ENCODE measurements at regions of chr11 and their contacts with region 1.

Region 1: DNA sequence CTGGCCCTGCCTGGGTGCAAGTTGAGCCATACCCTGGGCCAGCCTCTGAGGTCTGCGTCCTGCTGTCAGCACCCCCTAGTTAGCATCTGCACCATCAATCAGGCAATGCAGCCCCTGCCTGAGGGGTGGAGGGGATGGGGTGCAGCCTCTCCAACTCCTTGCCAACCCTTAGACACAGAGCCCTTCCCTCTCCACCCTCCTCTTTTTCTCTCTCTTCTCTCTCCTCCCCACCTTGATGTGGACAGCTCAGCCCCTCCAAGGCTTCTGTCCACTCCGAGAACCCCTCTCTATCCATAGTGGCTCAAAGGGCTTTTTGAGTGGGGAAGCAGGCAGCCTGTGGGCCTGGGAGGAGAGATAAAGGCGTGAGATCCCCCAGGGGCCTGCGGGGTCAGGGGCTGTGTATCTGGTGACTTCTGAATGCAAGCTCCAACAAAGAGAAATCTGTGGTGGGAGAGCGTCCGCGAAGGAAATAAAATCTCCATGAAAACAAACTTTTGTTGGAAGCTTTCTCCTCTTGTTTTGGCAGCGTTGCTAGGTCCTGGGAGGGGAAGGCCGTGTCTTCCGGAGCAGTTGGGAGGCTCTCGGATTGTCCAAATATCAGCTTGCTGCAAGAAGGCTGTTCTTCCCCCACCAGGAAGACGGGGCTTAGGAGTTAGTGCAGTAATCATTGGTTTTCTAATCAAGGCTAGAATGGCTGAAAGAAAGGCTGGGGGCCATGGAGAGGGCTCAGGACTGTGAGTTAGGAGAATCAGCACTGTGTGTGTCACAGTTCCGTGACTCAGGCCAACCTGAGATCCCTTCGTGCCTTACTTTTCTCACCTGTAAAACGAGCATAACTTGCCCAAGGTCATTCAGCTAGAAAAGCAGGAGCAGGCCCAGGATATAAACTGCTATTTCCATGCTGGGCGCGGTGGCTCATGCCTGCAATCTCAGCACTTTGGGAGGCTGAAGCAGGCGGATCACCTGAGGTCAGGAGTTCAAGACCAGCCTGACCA is 50.3 kb downstream of the PKNOX2 start:
- DNase-seq: peak; percentile 58 to 72
- ATAC-seq: peak; percentile 61 to 92 (median 81)
- H3K4me3 ChIP-seq: no peak overlapping the region
- H3K27ac ChIP-seq: peak overlapping the region in 8 of 10 donors; percentile 46 to 75 (median 62)
- H3K4me1 ChIP-seq: peaks cover 0 to 52% (median 27%) of the 10 kb centered on the region in 9 donors
- H3K27me3 ChIP-seq: no peaks in the 10 kb centered on the region
- CTCF ChIP-seq: no peak

Region 2: GRCh38 chr11:124800226-124800929 is 414.5 kb before region 1 on chr11 and contains the start of gene MSANTD2:
- intact Hi-C with region 1: no loop called
- DNase-seq: peak; percentile 83 to 86
- ATAC-seq: peak; percentile 96 to 99 (median 98)
- H3K4me3 ChIP-seq: peak within 1 kb of the TSS; percentile 65 to 93 (median 84)
- H3K27ac ChIP-seq: peak within 1 kb of the TSS; percentile 94 to 100 (median 98)
- H3K4me1 ChIP-seq: peaks cover 5 to 37% (median 33%) of the 10 kb centered on the region in 9 donors
- H3K27me3 ChIP-seq: peaks cover 0 to 4% (median 0%) of the 10 kb centered on the region in 7 donors
- CTCF ChIP-seq: no peak
- total RNA-seq, gene MSANTD2: 2.4 to 4.6 (median 3.1) TPM

Region 3: DNA sequence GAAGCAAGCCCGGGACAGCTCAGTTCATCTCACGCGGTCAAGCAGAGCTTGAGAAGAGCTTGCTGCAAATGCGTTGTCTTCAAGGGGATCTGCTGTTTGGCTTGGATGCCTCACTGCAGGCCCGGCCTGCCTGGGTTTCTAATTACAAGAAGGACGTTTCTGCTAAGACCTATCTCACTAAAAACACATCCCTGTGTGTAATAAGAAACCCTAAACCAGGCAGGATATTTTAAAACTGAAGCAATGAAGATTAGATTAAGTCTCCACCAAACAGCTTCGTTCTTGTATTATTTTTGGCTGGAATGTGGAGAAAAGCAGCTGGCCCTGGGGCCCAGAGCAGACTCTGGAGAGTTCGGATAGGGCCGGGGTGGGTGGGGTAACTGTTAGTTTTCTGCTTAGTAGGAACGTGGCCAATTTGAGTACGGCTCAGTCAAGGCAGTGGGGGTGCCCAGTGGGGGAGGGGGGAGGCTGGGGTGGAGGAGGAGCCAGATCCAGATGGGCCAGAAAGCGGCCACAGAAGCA is 44.3 kb before region 1 on chr11:
- intact Hi-C with region 1: loop called in 4 of 10 experiments (anchors 5 to 10 kb)
- DNase-seq: peak; percentile 78 to 80
- ATAC-seq: peak; percentile 69 to 83 (median 77)
- H3K4me3 ChIP-seq: peak overlapping the region in 5 of 10 donors; percentile 6 to 36 (median 15)
- H3K27ac ChIP-seq: peak overlapping the region; percentile 49 to 80 (median 72)
- H3K4me1 ChIP-seq: peaks cover 2 to 59% (median 29%) of the 10 kb centered on the region in 9 donors
- H3K27me3 ChIP-seq: peaks cover 0 to 41% (median 15%) of the 10 kb centered on the region in 7 donors
- CTCF ChIP-seq: no peak